Activated T-helper 1 cell treated with anti-CD3 and anti-CD28 coated beads, Interleukin-12 subunit alpha, Interleukin-12 subunit beta, Interleukin-2, Interleukin-4 antibody, amounts not matched to agents 30 ng/mL and 10 ng/mL and 1 ng/mL, durations not matched to agents 14 hours and 24 hours and 36 hours (primary cell): ENCODE measurements at regions of chr17 and their contacts with region 1.

Region 1: GRCh38 chr17:48084932-48085444 is 16.3 kb downstream of the CBX1 start:
- DNase-seq: no peak
- H3K4me3 Mint-ChIP-seq: no peak overlapping the region
- H3K27ac Mint-ChIP-seq: no peak overlapping the region
- H3K4me1 Mint-ChIP-seq: peaks cover 9% of the 10 kb centered on the region
- H3K27me3 Mint-ChIP-seq: no peaks in the 10 kb centered on the region

Region 2: DNA sequence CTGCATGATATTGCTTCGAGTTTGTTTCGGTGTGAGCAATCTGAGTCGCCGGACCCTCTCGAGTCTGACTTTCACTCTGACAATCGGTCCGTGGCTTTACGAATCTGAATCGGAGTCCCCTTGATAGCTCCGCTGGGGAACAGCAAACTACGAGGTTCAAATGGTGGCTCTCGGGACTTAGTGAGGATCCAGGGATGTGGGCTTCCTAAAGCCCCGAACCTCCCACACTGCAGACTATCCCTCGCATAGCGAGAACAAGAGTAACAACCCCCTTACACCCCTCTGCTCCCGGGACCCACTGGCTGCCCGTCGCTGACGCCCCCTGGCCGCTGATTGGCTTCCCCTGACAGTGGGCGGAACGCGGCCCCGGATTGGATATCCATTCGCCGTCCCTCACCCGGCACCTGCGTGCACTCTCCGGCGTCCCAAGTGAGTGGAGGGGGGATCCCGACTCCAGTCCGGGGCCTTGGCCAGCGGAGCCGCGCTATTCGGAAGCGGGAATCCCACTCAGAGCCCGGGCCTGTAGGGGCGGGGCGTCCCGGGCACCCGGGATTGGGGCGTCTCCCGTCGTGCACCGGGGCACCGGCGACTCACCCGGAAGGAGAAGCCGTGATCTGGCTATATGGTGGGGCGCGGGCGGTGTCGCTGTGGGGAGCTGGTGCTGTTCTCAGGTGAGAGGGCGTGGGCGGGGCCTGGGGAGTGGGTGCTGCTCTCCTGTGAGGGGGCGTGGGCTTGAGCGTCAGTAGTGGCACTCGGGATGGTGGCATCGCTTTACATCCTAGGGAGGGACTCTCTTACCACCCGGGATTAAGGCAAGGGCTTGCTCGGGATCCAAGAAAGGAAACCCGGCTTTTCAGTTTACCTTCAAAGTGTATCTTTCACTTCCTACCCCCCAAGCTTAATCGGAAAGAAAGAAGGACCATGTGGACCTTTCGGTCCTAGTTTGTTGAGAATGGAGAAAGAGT is 22.5 kb after region 1 on chr17 and contains the start of gene SNX11:
- intact Hi-C with region 1: loop called (anchors 2 kb)
- DNase-seq: peak; percentile 91
- H3K4me3 Mint-ChIP-seq: peak within 1 kb of the TSS; percentile 100
- H3K27ac Mint-ChIP-seq: peak within 1 kb of the TSS; percentile 99
- H3K4me1 Mint-ChIP-seq: peaks cover 63% of the 10 kb centered on the region
- H3K27me3 Mint-ChIP-seq: no peaks in the 10 kb centered on the region
- total RNA-seq, gene SNX11: 31.1 and 37.1 TPM in 2 replicates

Region 3: GRCh38 chr17:48131216-48131824 is 46.3 kb after region 1 on chr17:
- intact Hi-C with region 1: loop called (anchors 1 kb)
- DNase-seq: peak; percentile 41
- H3K4me3 Mint-ChIP-seq: no peak overlapping the region
- H3K27ac Mint-ChIP-seq: no peak overlapping the region
- H3K4me1 Mint-ChIP-seq: peaks cover 11% of the 10 kb centered on the region
- H3K27me3 Mint-ChIP-seq: no peaks in the 10 kb centered on the region